ENCODE measurements at regions of chr5 and their contacts with region 1.

Region 1: DNA sequence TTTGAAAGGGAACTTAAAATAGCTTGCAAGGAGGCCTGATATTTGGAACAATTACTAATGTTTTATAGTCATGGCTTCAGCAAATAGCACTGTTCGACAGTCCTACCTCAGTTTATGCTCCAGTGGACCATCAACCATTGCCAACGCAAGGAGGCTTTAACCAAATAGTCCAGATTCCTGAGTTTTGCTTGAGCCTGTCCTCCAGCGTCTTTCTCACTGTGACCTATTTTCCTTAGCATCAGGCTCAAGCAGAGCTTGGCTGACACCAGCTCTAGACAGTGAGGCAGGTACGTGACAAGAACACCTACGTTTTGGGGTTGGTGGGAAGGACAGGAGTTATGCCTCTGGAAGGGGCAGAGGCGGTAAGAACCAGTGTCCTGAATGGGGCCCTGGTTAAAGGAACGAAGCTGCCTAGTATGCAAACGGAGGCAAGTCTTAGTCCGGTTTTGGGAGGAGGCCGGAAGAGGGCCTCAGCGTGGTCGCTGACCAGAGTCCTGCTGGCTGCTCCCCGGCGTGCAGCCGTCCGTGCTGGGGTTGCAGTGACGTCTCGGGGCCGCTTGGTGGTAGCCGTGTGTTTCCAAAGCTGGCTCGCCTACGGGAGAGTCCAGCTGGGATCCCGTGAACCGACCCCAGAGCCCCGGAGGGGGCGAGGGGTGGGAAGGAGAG is 998 bp upstream of the FGF18 start:
- ATAC-seq: peak; percentile 52 to 79 (median 78)
- H3K4me3 ChIP-seq: peak overlapping the region; percentile 35 to 49 (median 44)
- H3K27ac ChIP-seq: no peak overlapping the region
- H3K4me1 ChIP-seq: peaks cover 10 to 20% of the 10 kb centered on the region in 2 donors

Region 2: GRCh38 chr5:171850324-171851285 is 432.2 kb after region 1 on chr5:
- in situ Hi-C with region 1: loop called in 1 of 9 experiments (anchors 25 kb)
- ATAC-seq: peak in 1 of 8 experiments; percentile 45
- H3K4me3 ChIP-seq: no peak overlapping the region
- H3K27ac ChIP-seq: no peak overlapping the region
- H3K4me1 ChIP-seq: peaks cover 6 to 8% of the 10 kb centered on the region in 2 donors

Region 3: DNA sequence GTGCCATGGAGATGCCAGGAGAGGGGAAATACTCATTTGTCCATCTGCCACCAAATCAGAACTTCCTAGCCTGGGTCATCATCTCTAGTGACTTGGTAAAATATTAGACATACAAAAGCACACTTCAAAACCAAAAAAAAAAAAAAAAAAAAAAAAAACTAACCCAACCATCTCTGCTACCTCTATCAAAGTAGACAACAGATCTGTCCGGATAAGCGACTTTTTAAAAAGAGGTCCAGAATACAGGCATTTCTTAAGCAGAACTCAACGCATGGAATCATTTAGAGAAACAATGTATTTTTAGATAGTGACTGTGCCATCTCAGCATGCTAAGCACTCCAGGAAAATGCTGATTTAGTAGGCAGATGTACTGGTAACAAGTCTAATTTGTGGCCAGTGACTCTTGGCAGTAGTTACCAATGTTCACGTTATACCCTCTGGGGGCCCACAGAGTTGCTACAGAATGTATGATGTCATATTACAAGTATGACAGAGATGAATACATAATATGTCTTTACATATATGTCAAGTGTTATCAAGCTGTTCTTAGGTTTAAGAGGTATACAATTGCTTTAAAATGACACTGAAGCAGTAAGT is 474.9 kb after region 1 on chr5:
- in situ Hi-C with region 1: loop called in 2 of 9 experiments (anchors 25 kb)
- ATAC-seq: peak in 4 of 8 experiments; percentile 63 to 96 (median 77)
- H3K4me3 ChIP-seq: no peak overlapping the region
- H3K27ac ChIP-seq: no peak overlapping the region
- H3K4me1 ChIP-seq: no peaks in the 10 kb centered on the region

Region 4: DNA sequence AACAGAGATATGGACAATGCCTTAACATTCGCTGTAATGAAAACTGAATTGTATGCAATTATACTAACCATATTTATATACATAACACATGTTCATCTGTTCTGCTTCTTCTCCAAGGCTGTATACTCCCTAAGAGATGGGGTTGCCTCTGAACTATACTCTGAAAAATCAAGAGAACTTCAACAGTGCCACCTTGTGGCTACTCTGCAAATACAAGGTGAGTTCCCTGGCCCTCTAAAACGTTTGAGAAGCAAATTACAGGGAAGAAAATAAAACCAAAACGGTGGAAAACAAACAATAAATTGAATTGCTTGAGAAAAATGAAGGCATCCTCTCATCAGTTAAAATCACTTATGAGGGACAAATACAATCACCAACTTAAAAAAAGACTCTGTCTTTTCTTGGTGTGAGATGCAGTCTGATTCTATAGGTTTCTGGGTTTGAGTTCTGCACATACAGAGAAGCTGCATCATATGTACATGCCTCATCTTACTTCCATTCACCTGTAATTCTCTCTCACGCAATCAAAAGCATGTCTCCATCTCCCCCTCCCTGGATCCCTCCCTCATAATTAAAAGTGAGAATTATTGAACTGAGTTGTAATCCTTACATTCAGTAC is 489.4 kb after region 1 on chr5:
- in situ Hi-C with region 1: loop called in 4 of 9 experiments (anchors 10 to 25 kb)
- ATAC-seq: peak; percentile 47 to 89 (median 78)
- H3K4me3 ChIP-seq: no peak overlapping the region
- H3K27ac ChIP-seq: no peak overlapping the region
- H3K4me1 ChIP-seq: peaks cover 0 to 5% of the 10 kb centered on the region in 2 donors

Region 5: GRCh38 chr5:172006321-172007174 is 588.1 kb after region 1 on chr5 and contains the start of gene FBXW11:
- in situ Hi-C with region 1: loop called in 1 of 9 experiments (anchors 25 kb)
- ATAC-seq: peak; percentile 79 to 92 (median 90)
- H3K4me3 ChIP-seq: peak within 1 kb of the TSS; percentile 53 to 77 (median 62)
- H3K27ac ChIP-seq: peak within 1 kb of the TSS; percentile 99
- H3K4me1 ChIP-seq: peaks cover 8 to 13% of the 10 kb centered on the region in 2 donors
- total RNA-seq, gene FBXW11: 43.5 to 86.7 (median 58.9) TPM

Measured in motor neuron (in vitro differentiated cells).